ENCODE measurements at regions of chr17 and their contacts with region 1.

Region 1: DNA sequence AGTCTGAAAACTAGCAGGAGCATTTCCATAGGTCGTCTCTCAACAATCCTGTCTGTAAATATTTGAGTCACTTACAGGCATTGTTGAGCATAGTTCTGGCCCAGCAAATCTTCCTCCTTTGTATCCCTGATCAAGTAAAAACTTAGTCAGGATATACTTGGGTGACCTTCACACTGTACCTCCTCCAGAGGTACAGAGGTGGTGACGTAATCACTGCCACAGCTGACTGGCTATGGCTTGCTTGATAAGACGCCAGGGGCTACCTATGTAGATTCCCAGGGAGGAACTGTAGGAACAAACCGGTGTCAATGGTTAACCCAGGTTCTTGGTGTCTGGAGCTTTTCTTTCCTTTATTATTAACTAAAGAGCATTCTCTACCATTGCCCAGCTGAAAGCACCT is at the start of gene KCNJ16:
- DNase-seq: no peak
- H3K4me3 ChIP-seq: no peak within 1 kb of the TSS
- H3K27ac ChIP-seq: no peak within 1 kb of the TSS
- H3K4me1 ChIP-seq: no peaks in the 10 kb centered on the region
- H3K27me3 ChIP-seq: no peaks in the 10 kb centered on the region
- CTCF ChIP-seq: no peak
- EP300 ChIP-seq: no peak
- POLR2A ChIP-seq: no peak
- total RNA-seq, gene KCNJ16: 0.28 TPM in 1 of 4 donors, not detected in the others

Region 2: GRCh38 chr17:69949973-69950695 is 124.8 kb before region 1 on chr17:
- intact Hi-C with region 1: loop called (anchors 5 kb)
- DNase-seq: no peak
- H3K4me3 ChIP-seq: no peak overlapping the region
- H3K27ac ChIP-seq: no peak overlapping the region
- H3K4me1 ChIP-seq: peaks cover 0 to 22% (median 17%) of the 10 kb centered on the region in 4 donors
- H3K27me3 ChIP-seq: no peaks in the 10 kb centered on the region
- CTCF ChIP-seq: no peak
- EP300 ChIP-seq: no peak
- POLR2A ChIP-seq: no peak